MCF 10A (cell line): ENCODE measurements at regions of chr1 and their contacts with region 1.

Region 1: DNA sequence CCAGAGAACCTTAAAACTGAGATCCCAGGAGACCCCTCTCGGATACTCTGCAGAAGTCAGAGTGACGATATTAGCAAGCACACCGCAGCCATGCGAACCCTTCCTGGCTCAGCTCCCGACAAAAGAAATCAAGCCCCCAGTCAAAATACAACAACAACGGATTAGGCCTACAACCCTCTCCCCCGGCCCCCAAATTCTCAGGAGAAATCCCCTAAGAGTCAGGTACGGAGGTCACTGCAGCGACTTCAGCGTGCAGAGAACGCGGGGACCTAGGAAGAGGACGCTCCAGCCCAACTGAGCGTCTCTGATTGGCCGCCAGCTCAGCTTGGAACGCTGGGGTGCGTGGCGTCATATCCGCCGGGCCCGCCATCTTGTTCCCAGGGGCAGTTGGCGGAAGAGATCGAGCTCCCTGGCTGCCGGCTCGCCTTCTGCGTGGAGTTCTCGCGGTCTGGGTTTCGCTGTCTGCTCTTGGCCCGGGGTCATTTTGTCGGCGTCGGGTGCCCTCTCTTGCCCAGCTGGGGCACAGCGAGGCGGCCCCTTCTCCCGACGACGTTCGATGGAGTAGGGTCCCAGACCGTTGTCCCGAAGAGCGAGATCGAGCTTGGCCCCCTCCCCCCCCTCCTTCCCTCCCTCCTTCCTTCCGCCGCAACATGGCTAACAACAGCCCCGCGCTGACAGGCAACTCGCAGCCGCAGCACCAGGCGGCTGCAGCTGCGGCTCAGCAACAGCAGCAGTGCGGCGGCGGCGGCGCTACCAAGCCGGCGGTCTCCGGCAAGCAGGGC is at the start of gene PRPF38B:
- DNase-seq: peak; percentile 93
- H3K4me3 Mint-ChIP-seq: peak within 1 kb of the TSS; percentile 100
- H3K27ac Mint-ChIP-seq: peak within 1 kb of the TSS; percentile 99
- H3K4me1 Mint-ChIP-seq: peaks cover 26% of the 10 kb centered on the region
- H3K27me3 Mint-ChIP-seq: no peaks in the 10 kb centered on the region
- CTCF ChIP-seq: no peak
- total RNA-seq, gene PRPF38B: 65.1 and 65.3 TPM in 2 replicates

Region 2: GRCh38 chr1:108679582-108680213 is 12.4 kb before region 1 on chr1:
- CTCF ChIA-PET with region 1: interaction called, 4 read pairs
- POLR2A ChIA-PET with region 1: interaction called, 21 read pairs
- intact Hi-C with region 1: no loop called
- DNase-seq: no peak
- H3K4me3 Mint-ChIP-seq: no peak overlapping the region
- H3K27ac Mint-ChIP-seq: no peak overlapping the region
- H3K4me1 Mint-ChIP-seq: peaks cover 5% of the 10 kb centered on the region
- H3K27me3 Mint-ChIP-seq: no peaks in the 10 kb centered on the region
- CTCF ChIP-seq: no peak

Region 3: GRCh38 chr1:108719656-108720435 is 27.7 kb after region 1 on chr1:
- CTCF ChIA-PET with region 1: interaction called, 6 read pairs
- POLR2A ChIA-PET with region 1: interaction called, 73 read pairs
- intact Hi-C with region 1: no loop called
- DNase-seq: peak; percentile 88
- H3K4me3 Mint-ChIP-seq: peak overlapping the region; percentile 10
- H3K27ac Mint-ChIP-seq: peak overlapping the region; percentile 78
- H3K4me1 Mint-ChIP-seq: peaks cover 17% of the 10 kb centered on the region
- H3K27me3 Mint-ChIP-seq: no peaks in the 10 kb centered on the region
- CTCF ChIP-seq: no peak

Region 4: GRCh38 chr1:108753363-108753762 is 61.2 kb after region 1 on chr1:
- CTCF ChIA-PET with region 1: interaction called, 6 read pairs
- POLR2A ChIA-PET with region 1: interaction called, 99 read pairs
- intact Hi-C with region 1: no loop called
- DNase-seq: no peak
- H3K4me3 Mint-ChIP-seq: no peak overlapping the region
- H3K27ac Mint-ChIP-seq: no peak overlapping the region
- H3K4me1 Mint-ChIP-seq: peaks cover 12% of the 10 kb centered on the region
- H3K27me3 Mint-ChIP-seq: no peaks in the 10 kb centered on the region
- CTCF ChIP-seq: no peak

Region 5: DNA sequence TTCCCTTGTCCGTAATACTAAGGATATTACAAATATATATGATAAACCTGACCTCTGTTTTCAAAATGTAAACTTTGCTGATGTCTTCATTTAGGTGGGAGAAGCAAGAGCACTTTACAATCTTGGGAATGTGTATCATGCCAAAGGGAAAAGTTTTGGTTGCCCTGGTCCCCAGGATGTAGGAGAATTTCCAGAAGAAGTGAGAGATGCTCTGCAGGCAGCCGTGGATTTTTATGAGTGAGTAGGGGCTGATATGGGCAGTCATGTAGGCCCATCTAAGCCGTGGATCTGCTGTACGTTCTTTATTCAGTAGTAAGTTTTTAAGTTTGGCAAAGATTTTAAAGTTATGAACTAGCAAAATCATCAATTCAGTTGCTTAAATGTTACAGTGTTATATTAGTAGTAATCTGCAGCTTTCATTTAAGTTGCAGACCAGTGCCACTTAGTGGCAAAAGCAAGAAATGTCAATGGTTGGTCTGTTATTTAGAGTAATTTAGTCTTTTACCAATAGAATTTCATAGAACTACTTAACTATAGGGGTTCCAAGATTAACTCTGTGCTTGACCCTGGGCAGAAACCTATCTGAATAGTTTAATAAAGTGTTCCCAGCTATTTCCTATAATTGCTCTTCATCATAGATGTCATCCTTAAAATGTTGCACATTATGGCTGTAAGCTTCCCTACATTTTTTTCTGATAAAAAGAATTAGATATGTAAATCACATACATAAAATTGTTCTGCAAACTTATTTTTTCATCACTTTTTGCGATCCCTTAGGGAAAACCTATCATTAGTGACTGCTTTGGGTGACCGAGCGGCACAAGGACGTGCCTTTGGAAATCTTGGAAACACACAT is 206.0 kb after region 1 on chr1:
- CTCF ChIA-PET with region 1: no interaction called
- POLR2A ChIA-PET with region 1: interaction called, 5 read pairs
- intact Hi-C with region 1: loop called (anchors 1 kb)
- DNase-seq: peak; percentile 73
- H3K4me3 Mint-ChIP-seq: no peak overlapping the region
- H3K27ac Mint-ChIP-seq: peak overlapping the region; percentile 23
- H3K4me1 Mint-ChIP-seq: peaks cover 20% of the 10 kb centered on the region
- H3K27me3 Mint-ChIP-seq: no peaks in the 10 kb centered on the region
- CTCF ChIP-seq: peak; percentile 63

Region 6: DNA sequence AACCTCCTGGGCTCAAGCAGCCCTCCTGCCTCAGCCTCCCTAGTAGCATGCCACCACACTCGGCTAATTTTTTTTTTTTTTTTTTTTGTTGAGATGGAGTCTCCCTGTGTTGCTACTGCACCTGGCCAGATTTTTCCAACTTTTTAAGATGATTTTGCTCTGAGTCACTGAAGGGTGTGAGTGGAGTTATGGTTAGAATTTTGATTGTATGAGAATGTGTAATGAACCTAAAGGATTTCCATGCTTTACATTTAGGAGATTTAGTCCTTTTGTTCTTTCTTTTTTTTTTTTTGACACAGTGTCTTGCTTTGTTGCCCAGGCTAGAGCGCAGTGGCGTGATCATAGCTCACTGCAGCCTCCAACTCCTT is 533.9 kb after region 1 on chr1:
- CTCF ChIA-PET with region 1: no interaction called
- POLR2A ChIA-PET with region 1: no interaction called
- intact Hi-C with region 1: no loop called
- DNase-seq: peak; percentile 23
- H3K4me3 Mint-ChIP-seq: no peak overlapping the region
- H3K27ac Mint-ChIP-seq: peak overlapping the region; percentile 78
- H3K4me1 Mint-ChIP-seq: peaks cover 12% of the 10 kb centered on the region
- H3K27me3 Mint-ChIP-seq: no peaks in the 10 kb centered on the region
- CTCF ChIP-seq: no peak